Activated CD8-positive, alpha-beta T cell treated with anti-CD3 and anti-CD28 coated beads, Interleukin-2, amount 10 ng/mL, durations not matched to agents 7 days and 5 days (primary cell): ENCODE measurements at regions of chr4 and their contacts with region 1.

Region 1: GRCh38 chr4:121696581-121697461 is at the start of gene ANXA5:
- DNase-seq: peak; percentile 84
- ATAC-seq: peak; percentile 96
- H3K4me3 Mint-ChIP-seq: peak within 1 kb of the TSS; percentile 97
- H3K27ac Mint-ChIP-seq: peak within 1 kb of the TSS; percentile 98
- H3K4me1 Mint-ChIP-seq: peaks cover 35% of the 10 kb centered on the region
- H3K27me3 Mint-ChIP-seq: peaks cover 38% of the 10 kb centered on the region
- total RNA-seq, gene ANXA5: 145 to 147 TPM

Region 2: GRCh38 chr4:121510341-121510874 is 186.4 kb before region 1 on chr4:
- CTCF ChIA-PET with region 1: no interaction called
- POLR2A ChIA-PET with region 1: no interaction called
- DNase-seq: no peak
- ATAC-seq: no peak
- H3K4me3 Mint-ChIP-seq: no peak overlapping the region
- H3K27ac Mint-ChIP-seq: no peak overlapping the region
- H3K4me1 Mint-ChIP-seq: peaks cover 9% of the 10 kb centered on the region
- H3K27me3 Mint-ChIP-seq: peaks cover 8% of the 10 kb centered on the region

Region 3: DNA sequence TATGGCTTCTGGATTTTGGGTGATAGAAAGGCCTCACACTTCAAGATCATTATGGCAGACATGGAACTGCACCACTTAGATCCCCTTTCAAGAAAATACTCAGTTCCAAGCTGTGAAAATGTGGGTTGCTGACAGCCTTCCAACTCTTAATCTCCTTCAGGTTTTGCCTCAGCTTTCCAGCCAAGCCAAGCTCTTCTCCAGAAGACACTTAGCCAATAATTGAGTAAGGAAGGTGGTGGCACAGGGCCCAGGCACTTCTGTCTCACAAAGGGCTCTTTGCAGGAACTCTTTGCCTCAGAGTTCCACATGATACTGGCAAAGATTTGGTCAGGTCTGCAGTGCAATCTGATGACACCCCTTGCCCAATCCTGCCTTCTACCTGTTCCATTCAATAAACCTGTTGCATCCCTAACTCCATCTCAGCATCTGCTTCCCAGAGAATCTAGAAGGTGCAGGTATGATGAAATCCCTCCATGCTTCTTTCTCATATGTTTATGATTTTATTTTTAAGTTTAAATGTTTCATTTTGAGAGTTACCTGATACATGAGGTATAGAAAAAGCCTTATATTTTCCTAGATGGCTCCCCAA is 30.6 kb before region 1 on chr4:
- CTCF ChIA-PET with region 1: no interaction called
- POLR2A ChIA-PET with region 1: no interaction called
- DNase-seq: no peak
- ATAC-seq: no peak
- H3K4me3 Mint-ChIP-seq: no peak overlapping the region
- H3K27ac Mint-ChIP-seq: no peak overlapping the region
- H3K4me1 Mint-ChIP-seq: no peaks in the 10 kb centered on the region
- H3K27me3 Mint-ChIP-seq: peaks cover 3% of the 10 kb centered on the region

Region 4: GRCh38 chr4:121707344-121707743 is 10.5 kb after region 1 on chr4:
- CTCF ChIA-PET with region 1: interaction called, 14 read pairs
- POLR2A ChIA-PET with region 1: interaction called, 9 read pairs
- DNase-seq: no peak
- ATAC-seq: no peak
- H3K4me3 Mint-ChIP-seq: no peak overlapping the region
- H3K27ac Mint-ChIP-seq: no peak overlapping the region
- H3K4me1 Mint-ChIP-seq: peaks cover 34% of the 10 kb centered on the region
- H3K27me3 Mint-ChIP-seq: peaks cover 40% of the 10 kb centered on the region